ENCODE measurements at regions of chr17 and their contacts with region 1.

Region 1: DNA sequence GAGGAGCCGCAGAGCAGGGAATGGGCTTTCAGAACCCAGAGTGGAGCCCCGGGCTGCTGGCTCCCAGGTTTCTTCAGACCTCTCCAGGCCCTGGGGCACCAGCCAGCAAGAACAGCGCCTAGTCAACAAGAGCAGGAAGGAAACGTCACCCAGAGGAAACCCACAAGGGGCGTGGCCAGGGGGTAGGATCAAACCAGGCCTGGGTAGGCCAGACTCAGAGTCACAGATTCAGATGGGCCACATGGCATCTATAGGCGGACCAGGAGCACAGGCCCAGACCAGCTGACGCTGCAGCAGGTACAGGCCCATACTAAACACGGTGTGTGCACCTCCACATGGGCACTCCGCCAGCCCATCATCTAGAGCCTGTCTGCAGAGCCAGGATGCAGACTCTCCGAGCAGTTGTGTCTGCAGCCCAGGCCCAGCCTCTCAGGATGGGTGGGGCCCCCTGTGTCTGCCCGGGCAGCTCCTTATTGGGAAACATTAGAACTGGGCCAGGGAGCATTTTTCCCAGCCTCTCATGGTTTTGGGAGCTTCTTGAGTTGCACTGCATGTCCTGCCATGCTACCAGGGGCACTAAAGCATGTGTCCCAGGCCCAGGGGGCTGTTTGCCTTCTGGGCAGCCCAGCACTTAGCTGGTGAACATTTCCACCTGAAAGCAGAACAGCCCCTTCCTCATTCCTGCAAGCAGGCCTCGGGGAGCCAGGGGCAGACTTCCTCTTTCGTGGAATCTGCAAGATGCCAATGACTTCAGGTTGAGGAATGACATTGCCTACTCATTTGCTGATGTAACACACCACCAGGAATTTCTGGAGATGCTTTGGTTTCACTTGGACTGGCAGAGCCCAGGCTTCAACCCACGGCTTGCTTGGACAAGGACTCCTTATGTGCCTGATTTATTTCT is at the start of gene NLRP1:
- DNase-seq: peak; percentile 89 to 98 (median 95)
- ATAC-seq: peak; percentile 90
- H3K4me3 ChIP-seq: peak within 1 kb of the TSS; percentile 82 to 87
- H3K4me3 Mint-ChIP-seq: peak within 1 kb of the TSS; percentile 97
- H3K27ac ChIP-seq: peak within 1 kb of the TSS; percentile 93 to 98
- H3K27ac Mint-ChIP-seq: peak within 1 kb of the TSS; percentile 99
- H3K4me1 ChIP-seq: peaks cover 66% of the 10 kb centered on the region
- H3K4me1 Mint-ChIP-seq: peaks cover 68% of the 10 kb centered on the region
- H3K27me3 ChIP-seq: no peaks in the 10 kb centered on the region
- H3K27me3 Mint-ChIP-seq: no peaks in the 10 kb centered on the region
- CTCF ChIP-seq: no peak
- total RNA-seq, gene NLRP1: 231 to 241 TPM

Region 2: GRCh38 chr17:4903051-4903818 is 681.4 kb before region 1 on chr17 and contains the start of gene CHRNE:
- CTCF ChIA-PET with region 1: no interaction called
- POLR2A ChIA-PET with region 1: no interaction called
- intact Hi-C with region 1: loop called in 1 of 2 experiments (anchors 5 kb)
- DNase-seq: peak; percentile 52 to 92 (median 79)
- ATAC-seq: peak; percentile 25
- H3K4me3 ChIP-seq: peak within 1 kb of the TSS; percentile 14 to 27
- H3K4me3 Mint-ChIP-seq: peak within 1 kb of the TSS; percentile 48
- H3K27ac ChIP-seq: peak within 1 kb of the TSS in 1 of 2 experiments; percentile 50
- H3K27ac Mint-ChIP-seq: peak within 1 kb of the TSS; percentile 76
- H3K4me1 ChIP-seq: peaks cover 51% of the 10 kb centered on the region
- H3K4me1 Mint-ChIP-seq: peaks cover 38% of the 10 kb centered on the region
- H3K27me3 ChIP-seq: no peaks in the 10 kb centered on the region
- H3K27me3 Mint-ChIP-seq: no peaks in the 10 kb centered on the region
- CTCF ChIP-seq: peak; percentile 94
- total RNA-seq, gene CHRNE: 5.5 to 6.1 TPM

Region 3: GRCh38 chr17:5706577-5707216 is 122.1 kb after region 1 on chr17:
- CTCF ChIA-PET with region 1: interaction called, 35 read pairs
- POLR2A ChIA-PET with region 1: no interaction called
- intact Hi-C with region 1: loop called in 1 of 2 experiments (anchors 1 kb)
- DNase-seq: peak; percentile 26 to 72 (median 61)
- ATAC-seq: peak; percentile 38
- H3K4me3 ChIP-seq: no peak overlapping the region
- H3K4me3 Mint-ChIP-seq: no peak overlapping the region
- H3K27ac ChIP-seq: no peak overlapping the region
- H3K27ac Mint-ChIP-seq: no peak overlapping the region
- H3K4me1 ChIP-seq: no peaks in the 10 kb centered on the region
- H3K4me1 Mint-ChIP-seq: no peaks in the 10 kb centered on the region
- H3K27me3 ChIP-seq: peaks cover 0 to 2% of the 10 kb centered on the region in 2 experiments
- H3K27me3 Mint-ChIP-seq: peaks cover 33% of the 10 kb centered on the region
- CTCF ChIP-seq: peak; percentile 63

Region 4: DNA sequence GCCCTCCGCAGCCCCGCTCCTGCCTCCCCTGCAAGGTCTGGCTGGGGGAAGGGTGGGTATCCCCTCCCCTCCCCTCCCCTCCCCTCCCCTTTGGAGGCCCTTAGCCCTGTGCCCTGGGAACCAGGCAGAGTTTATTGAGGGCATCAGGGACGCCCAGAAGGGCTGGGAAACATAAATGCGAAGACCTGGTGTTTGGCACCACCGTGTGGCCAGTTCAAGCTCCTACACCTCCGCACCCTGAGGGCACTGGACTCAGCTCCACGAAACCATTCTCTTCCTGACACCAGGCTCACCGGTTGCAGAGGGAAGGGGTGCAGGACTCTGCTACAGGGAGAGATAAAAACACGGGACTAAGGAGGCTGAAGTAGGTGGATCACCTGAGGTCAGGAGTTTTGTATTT is 851.3 kb after region 1 on chr17:
- CTCF ChIA-PET with region 1: interaction called, 11 read pairs
- POLR2A ChIA-PET with region 1: interaction called, 3 read pairs
- intact Hi-C with region 1: loop called (anchors 1 kb)
- DNase-seq: peak; percentile 25 to 75 (median 60)
- ATAC-seq: peak; percentile 93
- H3K4me3 ChIP-seq: no peak overlapping the region
- H3K4me3 Mint-ChIP-seq: no peak overlapping the region
- H3K27ac ChIP-seq: no peak overlapping the region
- H3K27ac Mint-ChIP-seq: no peak overlapping the region
- H3K4me1 ChIP-seq: no peaks in the 10 kb centered on the region
- H3K4me1 Mint-ChIP-seq: peaks cover 2% of the 10 kb centered on the region
- H3K27me3 ChIP-seq: no peaks in the 10 kb centered on the region
- H3K27me3 Mint-ChIP-seq: peaks cover 28% of the 10 kb centered on the region
- CTCF ChIP-seq: peak; percentile 77

Region 5: DNA sequence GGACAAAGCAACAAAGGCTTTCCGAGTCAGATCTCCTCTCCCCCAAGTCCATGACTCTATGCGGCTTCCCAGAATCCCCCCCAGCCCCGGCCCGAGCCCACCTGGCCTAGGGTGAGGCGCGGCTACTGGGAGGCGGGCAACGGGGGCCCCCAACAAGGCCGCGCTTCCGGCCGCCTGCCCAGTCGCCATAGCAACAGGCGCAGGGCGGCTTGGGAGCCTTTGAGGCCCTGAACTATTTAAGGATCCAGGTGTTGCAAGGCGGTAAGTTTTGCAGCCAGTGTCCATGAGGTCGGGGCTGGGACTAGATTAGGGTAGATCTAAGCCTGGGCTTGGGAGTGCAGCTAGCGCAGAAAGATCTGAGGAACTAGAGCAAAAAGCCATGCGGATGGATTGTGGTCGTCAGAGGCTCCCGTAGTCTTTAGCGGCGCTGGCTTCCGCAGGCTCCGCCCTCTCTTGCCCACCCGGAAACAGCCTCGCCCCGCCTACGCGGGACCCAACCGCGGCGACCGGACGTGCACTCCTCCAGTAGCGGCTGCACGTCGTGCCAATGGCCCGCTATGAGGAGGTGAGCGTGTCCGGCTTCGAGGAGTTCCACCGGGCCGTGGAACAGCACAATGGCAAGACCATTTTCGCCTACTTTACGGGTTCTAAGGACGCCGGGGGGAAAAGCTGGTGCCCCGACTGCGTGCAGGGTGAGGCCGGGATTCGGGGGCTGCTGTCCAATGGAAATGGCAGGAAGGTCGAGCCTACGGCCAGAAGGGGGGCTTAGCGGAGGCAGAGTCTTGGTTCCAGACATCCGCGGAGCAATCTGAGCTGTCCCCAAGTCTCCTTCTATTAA is 1056.1 kb after region 1 on chr17 and contains the starts of genes KIAA0753 and TXNDC17:
- CTCF ChIA-PET with region 1: no interaction called
- POLR2A ChIA-PET with region 1: no interaction called
- intact Hi-C with region 1: loop called in 1 of 2 experiments (anchors 10 kb)
- DNase-seq: peak; percentile 74 to 96 (median 91)
- ATAC-seq: peak; percentile 88
- H3K4me3 ChIP-seq: peak within 1 kb of the TSS; percentile 77 to 89
- H3K4me3 Mint-ChIP-seq: peak within 1 kb of the TSS; percentile 97
- H3K27ac ChIP-seq: peak within 1 kb of the TSS; percentile 89 to 91
- H3K27ac Mint-ChIP-seq: peak within 1 kb of the TSS; percentile 98
- H3K4me1 ChIP-seq: peaks cover 25% of the 10 kb centered on the region
- H3K4me1 Mint-ChIP-seq: peaks cover 45% of the 10 kb centered on the region
- H3K27me3 ChIP-seq: no peaks in the 10 kb centered on the region
- H3K27me3 Mint-ChIP-seq: no peaks in the 10 kb centered on the region
- CTCF ChIP-seq: no peak
- total RNA-seq, gene KIAA0753: 5.1 to 6.9 TPM
- total RNA-seq, gene TXNDC17: 20.0 to 21.4 TPM

Region 6: GRCh38 chr17:6843241-6843880 is 1258.7 kb after region 1 on chr17:
- CTCF ChIA-PET with region 1: no interaction called
- POLR2A ChIA-PET with region 1: no interaction called
- intact Hi-C with region 1: loop called in 1 of 2 experiments (anchors 5 kb)
- DNase-seq: peak in 2 of 9 experiments; percentile 56 to 69
- ATAC-seq: no peak
- H3K4me3 ChIP-seq: no peak overlapping the region
- H3K4me3 Mint-ChIP-seq: no peak overlapping the region
- H3K27ac ChIP-seq: no peak overlapping the region
- H3K27ac Mint-ChIP-seq: no peak overlapping the region
- H3K4me1 ChIP-seq: no peaks in the 10 kb centered on the region
- H3K4me1 Mint-ChIP-seq: peaks cover 3% of the 10 kb centered on the region
- H3K27me3 ChIP-seq: peaks cover 0 to 3% of the 10 kb centered on the region in 2 experiments
- H3K27me3 Mint-ChIP-seq: peaks cover 26% of the 10 kb centered on the region
- CTCF ChIP-seq: peak; percentile 66